Activated CD4-positive, alpha-beta T cell treated with anti-CD3 and anti-CD28 coated beads, Interleukin-2, amount 10 ng/mL, durations not matched to agents 24 days and 14 days (primary cell): ENCODE measurements at regions of chr17 and their contacts with region 1.

Region 1: DNA sequence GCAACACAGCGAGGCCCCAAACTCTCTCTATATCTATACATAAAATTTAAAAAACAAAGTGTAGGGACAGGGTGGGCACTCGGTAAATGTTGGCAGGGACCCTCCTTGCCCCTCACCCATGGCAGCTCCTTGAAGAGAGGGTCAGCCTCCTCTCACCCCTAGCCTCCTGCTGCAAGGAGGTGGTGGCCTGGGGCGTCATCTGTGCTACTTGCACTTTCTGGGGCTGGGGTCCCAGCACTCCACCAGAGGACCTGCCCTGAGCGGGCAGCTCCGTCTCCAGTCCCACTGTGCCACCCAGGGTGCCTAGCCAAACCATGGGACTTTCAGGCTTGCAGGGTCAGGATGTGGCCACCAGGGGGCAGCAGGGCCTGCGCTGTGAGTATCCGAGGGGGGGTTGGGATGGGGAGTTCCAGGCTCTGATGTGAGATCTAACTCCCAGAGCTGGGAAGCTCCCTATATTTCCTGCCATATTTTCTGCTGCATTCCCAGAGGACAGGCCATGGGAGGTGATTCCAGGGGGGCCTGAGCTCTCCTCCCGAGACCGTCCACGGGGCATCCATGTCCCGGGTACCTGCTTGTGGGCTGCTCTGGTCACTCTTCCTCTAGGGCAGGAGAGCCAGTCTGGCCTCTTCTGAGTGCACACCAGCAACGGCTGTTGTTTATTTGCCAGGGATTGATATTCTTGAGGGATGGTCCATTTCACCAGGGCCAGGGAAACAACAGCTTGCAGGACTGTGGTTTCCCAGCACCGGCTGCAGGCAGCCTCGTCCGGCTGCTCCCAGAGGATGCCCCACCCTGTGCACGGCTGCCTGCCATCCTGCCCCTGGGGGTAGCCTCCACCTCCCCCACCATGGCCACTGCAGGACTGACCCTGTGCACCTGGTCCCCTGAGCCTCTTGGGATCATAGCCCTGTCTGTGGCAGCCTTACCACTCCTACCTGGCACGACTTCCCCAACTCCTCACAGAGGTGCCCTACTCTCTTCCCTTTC is 1.1 kb downstream of the GPR142 start:
- DNase-seq: peak; percentile 92
- H3K4me3 Mint-ChIP-seq: peak overlapping the region; percentile 58
- H3K27ac Mint-ChIP-seq: no peak overlapping the region
- H3K4me1 Mint-ChIP-seq: peaks cover 14% of the 10 kb centered on the region
- H3K27me3 Mint-ChIP-seq: peaks cover 4% of the 10 kb centered on the region

Region 2: DNA sequence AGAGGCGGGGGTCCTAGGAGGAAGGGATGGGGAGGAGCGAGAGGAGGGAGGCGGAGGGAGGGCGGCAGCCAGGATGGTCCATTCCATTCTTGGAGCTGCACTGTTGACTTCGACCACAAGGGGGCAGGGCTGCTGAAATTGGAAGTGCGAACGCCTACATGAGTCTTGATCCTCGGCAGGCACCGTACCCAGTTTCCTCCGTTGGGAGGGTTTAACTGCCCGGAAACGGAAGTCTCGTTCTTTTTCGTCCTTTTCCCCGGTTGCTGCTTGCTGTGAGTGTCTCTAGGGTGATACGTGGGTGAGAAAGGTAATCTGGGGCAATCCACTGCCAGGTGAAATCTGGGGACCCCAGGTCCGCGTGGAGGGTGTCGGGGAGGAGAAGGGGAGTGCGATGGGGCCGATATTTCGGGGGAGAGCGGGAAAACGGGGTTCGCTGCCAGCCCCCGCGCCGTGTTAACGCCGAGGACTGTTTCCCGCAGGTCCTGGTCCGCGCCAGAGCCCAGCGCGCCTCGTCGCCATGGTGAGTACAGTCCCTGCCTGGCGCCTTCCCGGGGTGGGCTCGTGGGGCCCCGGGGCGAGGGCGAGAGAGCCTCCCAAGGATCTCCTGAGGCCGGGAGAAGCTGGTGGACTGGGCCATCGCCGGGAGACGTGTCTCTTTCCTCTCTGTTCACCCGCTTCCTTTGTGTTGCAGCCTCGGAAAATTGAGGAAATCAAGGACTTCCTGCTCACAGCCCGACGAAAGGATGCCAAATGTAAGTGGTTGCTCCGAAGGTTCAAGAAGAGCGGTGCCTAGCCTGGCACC is 164.7 kb before region 1 on chr17 and contains the start of gene RPL38:
- intact Hi-C with region 1: no loop called
- DNase-seq: peak; percentile 98
- H3K4me3 Mint-ChIP-seq: peak within 1 kb of the TSS; percentile 94
- H3K27ac Mint-ChIP-seq: peak within 1 kb of the TSS; percentile 95
- H3K4me1 Mint-ChIP-seq: peaks cover 36% of the 10 kb centered on the region
- H3K27me3 Mint-ChIP-seq: peaks cover 15% of the 10 kb centered on the region
- total RNA-seq, gene RPL38: 1,176 and 1,244 TPM in 2 replicates

Region 3: DNA sequence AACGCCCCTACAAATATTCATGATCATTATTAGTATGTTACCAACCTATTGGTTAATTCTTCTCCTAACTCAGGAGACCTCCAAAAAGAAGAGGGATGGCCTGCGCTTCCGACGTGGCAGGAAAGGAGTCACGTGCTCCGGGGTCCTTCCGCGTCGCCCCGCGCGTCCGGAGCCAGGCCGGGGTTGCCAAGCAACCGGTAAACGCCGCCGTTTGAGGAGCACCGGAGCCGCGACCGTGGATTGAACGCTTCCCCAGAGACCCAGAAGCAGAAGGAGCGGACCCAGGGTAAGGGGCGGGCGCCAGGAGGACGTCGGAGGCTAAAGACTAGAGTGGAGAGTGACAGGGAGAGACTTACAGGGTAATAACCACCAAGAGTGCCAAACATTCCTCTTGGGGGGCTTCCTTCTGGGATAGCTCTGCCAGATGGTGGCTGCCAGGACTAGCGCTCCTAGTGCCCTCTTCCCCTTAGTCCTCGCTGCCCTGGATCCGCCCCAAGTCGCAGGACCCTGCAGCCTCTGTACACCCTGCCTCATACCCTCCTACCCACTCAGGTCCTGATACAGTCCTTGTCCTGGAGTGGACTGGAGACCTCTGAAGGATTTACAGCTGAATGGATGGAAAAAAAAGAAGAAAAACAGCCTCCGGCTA is 94.2 kb before region 1 on chr17 and contains the start of gene DNAI2:
- intact Hi-C with region 1: no loop called
- DNase-seq: peak; percentile 77
- H3K4me3 Mint-ChIP-seq: peak within 1 kb of the TSS; percentile 74
- H3K27ac Mint-ChIP-seq: peak within 1 kb of the TSS; percentile 47
- H3K4me1 Mint-ChIP-seq: peaks cover 28% of the 10 kb centered on the region
- H3K27me3 Mint-ChIP-seq: peaks cover 14% of the 10 kb centered on the region
- total RNA-seq, gene DNAI2: 0.09 and 0.26 TPM in 2 replicates

Region 4: DNA sequence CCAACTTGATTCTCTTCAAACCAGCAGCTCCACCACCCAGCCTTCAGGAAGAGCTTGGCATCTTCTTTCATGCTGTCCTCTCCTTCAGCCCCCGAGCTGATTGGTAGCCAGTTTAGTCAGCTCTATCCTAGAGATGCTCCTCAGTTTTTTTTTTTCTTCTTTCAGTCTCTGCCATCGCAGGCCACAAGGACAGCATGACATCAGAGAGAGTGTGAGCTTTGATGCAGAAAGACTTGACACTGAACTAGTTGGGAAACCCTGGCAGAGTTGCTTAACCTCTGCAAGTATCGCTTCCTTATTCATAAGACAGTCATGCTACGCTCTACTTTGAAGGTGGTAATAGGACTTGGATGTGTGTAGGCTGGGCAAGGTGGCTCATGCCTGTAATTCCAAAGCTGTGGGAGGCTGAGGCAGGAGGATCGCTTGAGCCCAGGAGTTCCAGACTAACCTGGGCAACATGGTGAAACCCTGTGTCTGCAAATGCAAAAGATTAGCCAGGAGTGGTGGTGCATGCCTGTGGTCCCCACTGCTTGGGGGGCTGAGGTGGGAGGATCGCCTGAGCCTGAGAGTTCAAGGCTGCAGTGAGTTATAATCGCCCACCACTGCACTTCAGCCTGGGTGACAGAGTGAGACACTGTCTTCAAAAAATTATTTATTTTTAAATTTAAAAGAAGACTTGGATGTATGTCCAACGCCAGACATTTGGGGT is 160.3 kb after region 1 on chr17:
- intact Hi-C with region 1: loop called (anchors 1 kb)
- DNase-seq: no peak
- H3K4me3 Mint-ChIP-seq: no peak overlapping the region
- H3K27ac Mint-ChIP-seq: no peak overlapping the region
- H3K4me1 Mint-ChIP-seq: peaks cover 5% of the 10 kb centered on the region
- H3K27me3 Mint-ChIP-seq: peaks cover 26% of the 10 kb centered on the region